ENCODE measurements at regions of chr17 and their contacts with region 1.

Region 1: GRCh38 chr17:48586355-48587258 is 3.4 kb downstream of the HOXB3 start:
- DNase-seq: no peak
- ATAC-seq: no peak
- H3K4me3 Mint-ChIP-seq: peak overlapping the region; percentile 90
- H3K27ac Mint-ChIP-seq: no peak overlapping the region
- H3K4me1 Mint-ChIP-seq: peaks cover 44% of the 10 kb centered on the region
- H3K27me3 Mint-ChIP-seq: peaks cover 88% of the 10 kb centered on the region
- CTCF ChIP-seq: no peak

Region 2: DNA sequence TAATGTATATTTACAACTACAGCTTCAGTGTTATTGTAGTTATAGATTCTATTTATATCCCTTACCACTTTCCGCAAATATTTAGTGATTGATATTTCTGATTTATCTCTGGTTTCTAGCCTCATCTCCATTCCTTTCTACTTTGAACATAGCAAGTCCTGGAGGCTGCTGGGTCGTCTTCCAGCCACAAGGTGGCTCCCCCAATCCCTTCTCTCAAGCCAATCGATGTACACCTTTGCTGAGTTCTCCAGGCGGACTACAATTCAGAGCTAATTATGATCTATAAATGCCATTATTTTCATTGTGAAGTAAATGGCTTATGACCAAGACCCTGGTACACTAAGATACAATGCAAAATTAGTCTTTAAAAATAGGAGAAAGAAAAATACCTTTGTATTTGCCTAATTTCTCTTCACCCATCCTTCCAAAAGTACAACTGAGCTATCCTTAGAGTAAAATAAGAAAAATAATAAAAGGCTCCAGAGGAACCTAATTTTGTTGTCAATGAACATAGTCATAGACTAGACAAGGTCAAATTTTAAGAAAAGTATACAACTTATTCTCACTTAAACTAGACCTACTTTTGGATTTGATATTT is 278.7 kb before region 1 on chr17:
- CTCF ChIA-PET with region 1: interaction called, 13 read pairs
- POLR2A ChIA-PET with region 1: no interaction called
- intact Hi-C with region 1: no loop called
- DNase-seq: peak; percentile 20
- ATAC-seq: peak; percentile 86
- H3K4me3 Mint-ChIP-seq: no peak overlapping the region
- H3K27ac Mint-ChIP-seq: no peak overlapping the region
- H3K4me1 Mint-ChIP-seq: peaks cover 6% of the 10 kb centered on the region
- H3K27me3 Mint-ChIP-seq: no peaks in the 10 kb centered on the region
- CTCF ChIP-seq: peak; percentile 70

Region 3: DNA sequence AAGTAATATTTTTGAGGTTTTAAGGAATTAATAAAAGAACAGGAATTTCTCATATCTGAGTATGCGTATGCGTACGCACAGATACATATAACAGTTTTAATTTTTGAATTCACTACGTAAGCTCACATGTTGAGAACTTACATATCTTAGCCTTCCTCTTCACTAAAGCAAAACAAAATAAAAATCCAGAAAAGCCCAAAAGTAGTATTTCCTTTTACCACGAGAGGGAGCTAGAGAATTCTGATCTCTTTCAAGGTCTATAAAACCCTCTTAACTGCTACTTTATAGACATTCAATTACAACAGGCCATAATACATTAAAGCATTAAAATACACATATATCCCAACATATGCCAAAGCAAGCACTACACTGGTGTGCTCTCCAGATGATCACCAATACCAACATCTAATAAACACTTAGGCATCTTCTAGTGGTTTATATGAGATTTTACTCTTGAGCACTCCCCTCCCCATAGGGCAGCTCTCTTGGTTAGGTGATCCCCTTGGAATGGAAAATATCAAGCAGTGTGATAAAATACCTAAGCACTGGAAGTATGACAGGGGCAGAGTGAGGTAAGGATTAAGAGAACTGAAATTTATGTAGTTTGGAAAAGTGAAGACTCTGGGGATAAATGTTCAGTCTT is 250.6 kb before region 1 on chr17:
- CTCF ChIA-PET with region 1: interaction called, 21 read pairs
- POLR2A ChIA-PET with region 1: no interaction called
- intact Hi-C with region 1: no loop called
- DNase-seq: no peak
- ATAC-seq: peak; percentile 47
- H3K4me3 Mint-ChIP-seq: no peak overlapping the region
- H3K27ac Mint-ChIP-seq: no peak overlapping the region
- H3K4me1 Mint-ChIP-seq: no peaks in the 10 kb centered on the region
- H3K27me3 Mint-ChIP-seq: no peaks in the 10 kb centered on the region
- CTCF ChIP-seq: peak; percentile 60

Region 4: DNA sequence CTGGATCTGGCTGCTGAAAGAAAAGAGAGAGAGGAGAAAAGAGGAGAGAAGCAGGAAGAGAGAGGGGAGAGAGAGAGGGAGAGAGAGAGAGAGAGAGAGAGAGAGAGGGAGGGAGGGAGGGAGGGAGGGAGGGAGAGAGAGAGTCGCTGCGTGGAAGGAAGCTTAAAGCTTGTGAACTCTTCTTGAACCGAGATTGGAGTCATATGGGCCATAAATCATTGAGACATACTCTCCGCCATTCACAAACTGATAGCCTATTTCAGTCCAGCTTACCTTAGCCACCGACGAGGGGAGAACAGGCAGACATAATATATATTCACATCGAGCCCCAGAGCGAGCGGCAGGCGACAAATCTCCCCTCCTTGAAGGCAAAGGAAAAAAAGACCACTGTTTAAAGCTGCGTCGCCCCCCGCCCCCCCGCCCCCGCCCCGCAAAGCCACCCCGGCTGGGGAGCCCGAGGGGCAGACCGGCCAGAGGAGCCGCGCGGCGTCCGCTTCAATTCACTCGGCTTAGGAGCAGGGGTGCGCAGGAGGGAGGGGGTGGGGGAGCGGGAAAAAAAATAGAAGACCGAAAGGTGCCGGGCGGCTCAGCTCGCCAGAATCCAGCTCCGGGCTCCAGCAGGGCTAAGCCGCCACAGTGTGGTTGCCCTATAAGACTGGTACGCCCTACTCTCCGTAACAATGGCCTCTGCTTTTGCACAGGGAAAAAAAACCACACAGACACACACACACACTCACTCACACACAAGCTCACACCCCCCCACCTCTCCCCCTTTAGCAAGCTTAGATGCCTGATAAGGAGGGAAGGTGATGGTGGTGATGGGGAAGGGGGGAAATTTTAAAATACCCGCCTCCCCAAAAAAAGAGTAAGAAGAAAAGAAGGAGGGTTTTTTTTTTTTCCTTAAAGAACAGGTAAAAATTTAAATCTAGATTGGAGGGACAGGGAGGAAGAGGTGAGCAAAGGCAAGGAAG is 31.1 kb before region 1 on chr17:
- CTCF ChIA-PET with region 1: no interaction called
- POLR2A ChIA-PET with region 1: no interaction called
- intact Hi-C with region 1: no loop called
- DNase-seq: no peak
- ATAC-seq: peak; percentile 21
- H3K4me3 Mint-ChIP-seq: peak overlapping the region; percentile 53
- H3K27ac Mint-ChIP-seq: no peak overlapping the region
- H3K4me1 Mint-ChIP-seq: peaks cover 4% of the 10 kb centered on the region
- H3K27me3 Mint-ChIP-seq: peaks cover 32% of the 10 kb centered on the region
- CTCF ChIP-seq: no peak

Measured in activated B cell treated with CpG ODN at 0.5 μM for 24 hours (primary cell).